ENCODE measurements at regions of chr4 and their contacts with region 1.

Region 1: DNA sequence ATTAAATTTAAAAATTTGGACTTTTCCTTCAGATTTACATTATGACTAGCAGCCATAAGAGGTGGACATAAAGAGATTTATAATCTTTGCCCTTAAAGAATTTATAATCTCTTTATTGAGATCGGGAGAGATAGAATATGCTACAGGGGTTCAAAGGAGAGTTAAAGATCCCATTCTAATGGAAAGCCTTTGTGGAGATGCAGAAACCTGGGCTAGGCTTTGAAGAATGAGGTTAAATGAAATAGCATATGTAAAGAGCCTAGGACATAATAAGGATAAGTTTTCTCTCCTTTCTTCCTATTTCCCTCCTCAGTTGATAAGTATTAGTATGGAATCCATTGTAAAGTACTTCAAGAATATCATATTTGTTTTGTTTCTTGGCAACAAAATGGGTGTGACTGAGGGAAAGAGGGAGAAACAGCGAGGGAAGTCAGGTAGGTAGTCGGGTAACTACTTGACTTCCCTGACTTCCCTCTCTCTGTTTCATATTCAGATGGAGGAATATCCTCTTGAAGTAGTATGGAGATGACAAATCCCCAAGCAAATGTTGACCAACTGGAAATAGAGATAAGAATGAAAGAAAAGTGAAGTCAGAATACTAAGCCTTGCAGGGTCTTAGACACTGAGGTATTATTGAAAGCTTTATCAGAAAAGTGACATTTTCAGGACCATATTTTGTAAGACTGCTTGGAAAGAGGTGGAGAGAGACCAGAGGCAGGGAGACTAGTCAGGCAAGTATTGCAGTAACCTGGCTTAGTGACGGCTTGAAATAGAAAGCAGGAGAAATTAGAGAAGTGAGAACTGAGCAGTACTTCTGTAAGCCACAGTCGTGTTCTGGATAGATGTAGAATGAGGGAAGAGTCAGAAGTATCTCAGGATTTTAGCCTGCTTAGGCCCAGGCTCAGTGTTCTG is 82.9 kb downstream of the PDLIM5 start:
- DNase-seq: peak; percentile 53 to 80 (median 58)
- ATAC-seq: peak; percentile 76
- H3K4me3 ChIP-seq: peak overlapping the region; percentile 8; the same call in 1 of the 2 replicates
- H3K27ac ChIP-seq: peak overlapping the region; percentile 95
- H3K4me1 ChIP-seq: peaks cover 13 to 48% of the 10 kb centered on the region in 2 experiments
- H3K27me3 ChIP-seq: no peaks in the 10 kb centered on the region
- CTCF ChIP-seq: no peak
- EP300 ChIP-seq: peak; percentile 79
- POLR2A ChIP-seq: no peak
- RAD21 ChIP-seq: 0 out of 4 replicates have a peak, but pooled peaks of 1 of the 2 experiments have one; percentile 2

Region 2: DNA sequence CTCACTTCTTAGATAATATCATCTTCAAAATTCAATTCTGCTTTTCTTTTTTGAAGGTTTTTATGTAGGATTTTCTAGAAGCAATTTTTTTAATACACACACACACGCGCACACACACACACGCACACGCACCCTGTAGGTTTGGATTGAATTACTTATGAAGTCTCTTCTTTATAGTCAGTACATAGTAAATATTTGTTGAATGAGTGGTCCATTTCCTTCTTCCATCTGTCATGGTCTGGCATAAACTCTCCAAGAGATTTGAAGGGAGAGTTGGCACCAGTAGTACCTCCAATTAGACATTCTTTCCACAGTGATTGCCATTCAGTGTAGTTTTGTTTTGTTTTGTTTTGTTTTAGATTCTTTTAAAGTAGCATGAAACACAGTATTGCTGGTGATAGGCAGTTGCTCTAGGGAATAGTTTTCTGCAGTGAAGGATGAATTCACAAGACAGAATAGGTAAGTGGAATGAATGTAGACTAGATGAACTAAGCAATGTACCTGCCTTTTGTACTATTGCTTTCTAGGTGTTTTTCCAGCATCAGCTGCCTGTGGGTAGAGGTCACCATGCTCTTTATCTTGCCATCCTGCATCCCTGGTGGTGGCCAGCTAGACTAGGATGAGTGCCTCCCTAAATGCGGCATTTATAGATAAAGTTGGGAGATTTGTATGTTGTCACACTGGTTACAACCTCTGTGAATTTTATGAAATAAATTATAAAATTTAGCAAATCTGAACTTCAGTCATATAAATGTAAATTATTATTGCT is 62.4 kb before region 1 on chr4:
- CTCF ChIA-PET with region 1: no interaction called
- POLR2A ChIA-PET with region 1: no interaction called
- in situ Hi-C with region 1: no loop called
- intact Hi-C with region 1: no loop called
- DNase-seq: no peak
- ATAC-seq: no peak
- H3K4me3 ChIP-seq: no peak overlapping the region
- H3K27ac ChIP-seq: peak overlapping the region; percentile 20; the same call in 1 of the 3 replicates
- H3K4me1 ChIP-seq: peaks cover 8 to 21% of the 10 kb centered on the region in 2 experiments
- H3K27me3 ChIP-seq: no peaks in the 10 kb centered on the region
- CTCF ChIP-seq: no peak
- EP300 ChIP-seq: no peak
- POLR2A ChIP-seq: no peak
- RAD21 ChIP-seq: no peak

Region 3: DNA sequence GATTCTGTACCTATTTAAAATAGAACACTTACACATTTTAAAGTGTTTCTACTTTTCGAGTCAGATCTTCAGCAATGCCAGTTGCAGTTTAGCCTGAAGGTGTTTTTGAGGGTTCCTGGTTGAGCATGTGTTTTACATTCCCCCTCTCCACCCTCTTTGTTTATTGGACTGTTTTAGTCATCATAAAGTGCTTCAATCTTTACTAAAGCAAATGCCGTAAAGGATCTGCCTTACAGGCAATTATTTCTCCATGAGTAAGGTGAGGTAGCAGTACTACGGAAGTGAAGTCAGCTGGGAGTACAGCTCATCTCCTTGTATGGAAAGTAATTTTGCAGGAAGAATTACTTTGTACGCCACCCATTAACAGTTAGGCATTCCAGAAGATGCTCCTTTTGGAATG is 46.0 kb before region 1 on chr4:
- CTCF ChIA-PET with region 1: no interaction called
- POLR2A ChIA-PET with region 1: no interaction called
- in situ Hi-C with region 1: no loop called
- intact Hi-C with region 1: loop called (anchors 5 kb)
- DNase-seq: no peak
- ATAC-seq: no peak
- H3K4me3 ChIP-seq: no peak overlapping the region
- H3K27ac ChIP-seq: no peak overlapping the region
- H3K4me1 ChIP-seq: peaks cover 0 to 20% of the 10 kb centered on the region in 2 experiments; a peak in 3 of 5 replicates
- H3K27me3 ChIP-seq: no peaks in the 10 kb centered on the region
- CTCF ChIP-seq: no peak
- EP300 ChIP-seq: no peak
- POLR2A ChIP-seq: no peak
- RAD21 ChIP-seq: no peak

Region 4: DNA sequence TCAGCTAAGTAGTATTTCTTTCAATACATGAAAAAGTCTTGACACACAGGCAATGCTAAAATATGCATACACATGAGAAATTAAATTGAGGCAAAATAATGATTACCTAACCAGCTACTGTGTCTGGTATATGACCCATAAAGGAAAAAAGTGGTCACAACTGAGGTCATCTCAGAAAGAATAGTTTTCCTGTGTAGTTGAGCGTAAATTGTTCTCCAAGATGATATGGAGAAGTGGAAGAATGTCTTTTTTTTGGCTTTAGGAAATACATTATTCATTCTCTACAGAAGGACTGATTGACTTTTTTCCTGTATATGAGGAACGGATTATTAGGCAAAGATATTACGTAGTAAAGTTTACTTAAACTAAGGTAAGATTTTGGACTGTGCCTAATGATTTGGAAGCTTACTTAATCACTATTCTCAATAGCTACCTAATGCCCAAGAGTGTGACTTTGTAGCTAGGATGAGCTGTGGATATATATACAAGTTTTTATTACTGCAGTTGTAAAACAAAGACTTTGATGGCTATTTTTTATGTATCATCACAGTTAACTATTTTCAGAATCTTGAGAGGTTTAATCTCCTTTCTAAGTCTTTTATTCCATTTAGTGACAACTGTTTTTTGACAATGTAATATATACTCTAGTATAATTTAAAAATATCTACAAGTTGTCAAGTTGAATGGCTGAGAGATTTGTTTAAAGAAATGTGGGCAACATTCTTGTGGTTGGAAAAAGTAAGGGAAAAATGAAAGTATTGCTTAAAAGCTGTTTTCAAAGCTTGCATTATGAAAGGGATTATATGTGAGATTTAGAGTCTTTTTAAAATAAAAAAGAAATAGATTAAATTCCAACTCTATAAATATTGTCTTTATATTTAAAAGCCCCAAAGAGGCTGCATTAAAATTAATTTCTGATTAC is 17.2 kb after region 1 on chr4:
- CTCF ChIA-PET with region 1: no interaction called
- POLR2A ChIA-PET with region 1: no interaction called
- in situ Hi-C with region 1: no loop called
- intact Hi-C with region 1: loop called (anchors 1 kb)
- DNase-seq: no peak
- ATAC-seq: no peak
- H3K4me3 ChIP-seq: no peak overlapping the region
- H3K27ac ChIP-seq: no peak overlapping the region
- H3K4me1 ChIP-seq: peaks cover 5 to 24% of the 10 kb centered on the region in 2 experiments; a peak in 4 of 5 replicates
- H3K27me3 ChIP-seq: no peaks in the 10 kb centered on the region
- CTCF ChIP-seq: no peak
- EP300 ChIP-seq: no peak
- POLR2A ChIP-seq: no peak
- RAD21 ChIP-seq: no peak